ENCODE measurements at regions of chrX and their contacts with region 1.

Region 1: DNA sequence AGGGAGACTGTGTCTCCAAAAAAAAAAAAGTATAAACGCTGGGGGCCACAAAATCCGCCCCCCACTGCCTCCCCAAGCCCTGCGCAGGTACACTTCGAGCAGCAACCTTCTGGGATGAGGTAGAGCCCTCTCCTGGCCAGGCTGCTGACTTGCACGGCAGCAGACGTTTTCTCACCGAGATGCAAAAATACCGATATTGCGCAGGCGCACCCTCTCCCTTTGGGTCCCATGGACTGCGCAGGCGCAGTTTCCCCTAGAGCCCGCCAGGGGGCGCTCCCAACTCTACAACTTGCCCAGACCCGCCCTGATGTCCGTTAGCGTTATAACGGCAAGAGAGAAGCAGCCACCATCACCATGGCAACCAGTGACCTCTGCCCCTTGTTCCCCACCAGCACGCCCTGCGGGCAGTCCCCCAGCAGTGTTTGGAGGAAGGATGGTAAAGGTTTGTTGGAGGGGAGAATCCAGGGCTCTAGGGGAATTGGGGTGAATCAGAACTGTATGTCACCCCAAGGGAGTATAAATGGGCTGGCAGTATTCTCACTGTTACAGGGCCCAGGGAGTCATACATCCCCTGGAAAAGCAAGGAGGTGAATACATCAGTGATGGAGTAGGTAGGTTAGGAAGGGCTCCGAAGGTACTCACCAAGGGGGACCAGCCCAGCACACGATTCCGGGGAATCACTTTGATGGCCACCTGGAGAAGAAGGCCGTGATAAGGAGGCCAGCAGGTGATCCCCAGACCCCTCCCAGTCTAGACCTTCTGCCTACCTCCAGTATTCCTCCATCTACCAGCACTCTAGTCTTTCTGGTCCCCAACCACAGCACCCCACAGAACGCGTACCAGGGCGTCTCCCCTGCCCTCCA is 1.5 kb downstream of the PIM2 start:
- DNase-seq: peak; percentile 92
- H3K4me3 ChIP-seq: peak overlapping the region; percentile 99
- H3K27ac ChIP-seq: peak overlapping the region; percentile 80
- H3K4me1 ChIP-seq: peaks cover 62% of the 10 kb centered on the region
- CTCF ChIP-seq: peak; percentile 87

Region 2: DNA sequence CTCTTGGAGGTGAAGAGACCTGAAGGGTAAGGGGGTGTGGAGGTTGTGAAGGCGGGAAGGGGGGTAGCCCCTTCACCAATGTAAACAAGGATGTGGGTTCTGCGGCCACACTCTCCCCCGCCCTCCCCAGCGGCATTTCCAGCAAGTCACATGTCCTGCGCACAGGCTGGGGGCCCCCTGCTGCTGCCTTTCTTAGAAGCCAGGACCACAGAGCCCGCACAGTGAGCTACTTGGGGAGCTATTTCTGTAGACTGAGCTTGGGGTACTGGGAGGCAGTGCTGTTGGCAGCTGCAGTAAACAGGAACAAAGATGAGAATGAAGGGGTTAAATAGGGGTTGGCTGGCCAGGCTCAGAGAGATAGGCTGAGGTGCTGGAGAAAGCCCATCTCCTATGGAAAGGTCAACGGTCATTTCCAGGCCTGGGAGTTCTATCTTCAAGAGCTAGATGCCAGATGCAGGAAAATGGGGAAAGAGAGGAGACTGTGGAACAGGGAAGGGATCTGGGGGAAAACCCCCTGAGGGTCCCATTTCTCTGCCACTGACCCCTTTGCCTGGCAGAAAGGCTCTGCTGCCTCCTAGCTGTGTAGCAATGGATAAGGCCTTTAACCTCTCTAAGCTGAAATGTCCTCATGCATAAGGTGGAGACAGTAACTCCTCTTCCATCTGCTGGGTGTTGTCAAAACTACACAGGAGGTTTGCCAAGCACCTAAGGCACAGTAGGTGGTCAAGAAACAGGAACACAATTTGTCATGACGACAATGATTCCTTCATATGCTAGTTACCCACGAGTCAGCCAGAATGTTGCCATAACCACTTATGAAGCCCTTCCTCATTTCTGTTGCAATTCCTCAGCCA is 19.9 kb after region 1 on chrX:
- CTCF ChIA-PET with region 1: no interaction called
- POLR2A ChIA-PET with region 1: interaction called, 8 read pairs
- intact Hi-C with region 1: loop called (anchors 1 kb)
- DNase-seq: peak; percentile 91
- H3K4me3 ChIP-seq: peak overlapping the region; percentile 60
- H3K27ac ChIP-seq: peak overlapping the region; percentile 100
- H3K4me1 ChIP-seq: peaks cover 89% of the 10 kb centered on the region
- CTCF ChIP-seq: peak; percentile 74

Region 3: DNA sequence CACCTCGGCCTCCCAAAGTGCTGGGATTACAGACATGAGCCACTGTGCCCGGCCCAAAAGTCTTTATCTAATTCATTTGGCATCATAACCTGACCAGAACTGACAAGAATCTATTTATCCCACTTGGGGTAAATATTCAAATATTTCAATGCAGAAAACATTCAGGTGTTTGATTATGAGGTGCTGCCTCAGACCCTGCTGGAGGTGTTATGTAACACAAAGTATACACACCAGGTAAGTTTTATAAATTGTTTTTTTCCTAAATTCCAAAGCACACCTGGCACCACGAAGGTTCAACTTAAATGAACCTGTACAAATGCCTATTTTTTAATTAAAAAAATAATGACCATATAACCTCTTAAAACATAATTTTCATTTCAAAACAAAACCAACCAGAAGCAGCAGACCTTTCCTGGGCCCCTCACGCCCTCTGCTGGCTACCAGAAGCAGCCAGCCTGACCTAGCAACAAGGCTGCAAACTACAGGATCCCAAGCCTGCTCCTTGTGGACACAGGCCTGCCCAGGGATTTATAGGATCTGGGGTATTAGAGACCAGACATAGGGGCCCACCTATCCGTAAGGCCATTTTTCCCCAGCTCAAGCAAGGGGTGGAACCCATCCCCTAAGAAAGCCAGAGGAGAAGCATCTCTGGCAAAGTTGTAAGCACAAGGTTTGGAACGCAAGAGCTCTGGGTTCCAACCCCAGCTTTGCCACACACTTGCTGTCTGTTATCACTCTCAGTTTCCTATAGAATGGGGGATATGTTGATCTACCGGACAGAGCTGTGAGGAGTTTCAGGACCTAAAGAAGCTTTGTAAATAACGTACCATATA is 28.4 kb after region 1 on chrX:
- CTCF ChIA-PET with region 1: no interaction called
- POLR2A ChIA-PET with region 1: no interaction called
- intact Hi-C with region 1: loop called (anchors 1 kb)
- DNase-seq: peak; percentile 53
- H3K4me3 ChIP-seq: no peak overlapping the region
- H3K27ac ChIP-seq: peak overlapping the region; percentile 43
- H3K4me1 ChIP-seq: peaks cover 56% of the 10 kb centered on the region
- CTCF ChIP-seq: peak; percentile 86

Region 4: GRCh38 chrX:49043220-49043986 is 126.0 kb after region 1 on chrX and contains the start of gene TFE3:
- CTCF ChIA-PET with region 1: no interaction called
- POLR2A ChIA-PET with region 1: no interaction called
- intact Hi-C with region 1: loop called (anchors 2 kb)
- DNase-seq: peak; percentile 98
- H3K4me3 ChIP-seq: peak within 1 kb of the TSS; percentile 84
- H3K27ac ChIP-seq: peak within 1 kb of the TSS; percentile 55
- H3K4me1 ChIP-seq: peaks cover 45% of the 10 kb centered on the region
- CTCF ChIP-seq: peak; percentile 73
- total RNA-seq, gene TFE3: 7.6 and 10.2 TPM in 2 replicates

Measured in OCI-LY7 (cell line).